ENCODE measurements at regions of chr19 and their contacts with region 1.

Region 1: GRCh38 chr19:16608290-16608739 is 19.7 kb downstream of the MED26 start:
- DNase-seq: no peak
- ATAC-seq: no peak
- H3K4me3 Mint-ChIP-seq: no peak overlapping the region
- H3K27ac Mint-ChIP-seq: peak overlapping the region; percentile 64
- H3K4me1 Mint-ChIP-seq: peaks cover 83% of the 10 kb centered on the region
- H3K27me3 Mint-ChIP-seq: no peaks in the 10 kb centered on the region
- CTCF ChIP-seq: no peak

Region 2: DNA sequence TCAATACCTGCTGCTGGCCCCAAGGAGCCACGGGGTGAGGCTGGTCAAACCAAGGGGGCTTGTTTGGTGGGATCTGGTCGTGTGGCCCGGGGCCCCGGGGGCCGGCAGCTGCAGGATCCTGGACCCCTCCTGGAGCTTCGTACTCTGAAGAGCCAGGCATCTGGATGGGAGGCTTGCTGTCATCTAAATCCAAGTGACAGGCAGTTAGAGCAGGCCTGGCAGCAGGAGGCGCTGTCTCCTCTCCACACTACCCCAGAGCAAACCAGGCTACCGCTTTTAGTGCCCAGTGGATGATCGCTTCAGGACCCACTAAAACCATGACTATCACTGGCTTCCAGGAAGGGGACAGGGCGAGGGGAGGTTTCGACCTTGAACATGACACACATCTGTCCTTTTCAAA is 80.2 kb before region 1 on chr19:
- CTCF ChIA-PET with region 1: no interaction called
- POLR2A ChIA-PET with region 1: no interaction called
- intact Hi-C with region 1: loop called (anchors 1 kb)
- DNase-seq: no peak
- ATAC-seq: peak; percentile 67
- H3K4me3 Mint-ChIP-seq: no peak overlapping the region
- H3K27ac Mint-ChIP-seq: no peak overlapping the region
- H3K4me1 Mint-ChIP-seq: no peaks in the 10 kb centered on the region
- H3K27me3 Mint-ChIP-seq: no peaks in the 10 kb centered on the region
- CTCF ChIP-seq: no peak

Measured in activated B cell treated with CpG ODN at 0.5 μM for 24 hours (primary cell).